K562 (cell line): ENCODE measurements at regions of chr1 and their contacts with region 1.

Region 1: DNA sequence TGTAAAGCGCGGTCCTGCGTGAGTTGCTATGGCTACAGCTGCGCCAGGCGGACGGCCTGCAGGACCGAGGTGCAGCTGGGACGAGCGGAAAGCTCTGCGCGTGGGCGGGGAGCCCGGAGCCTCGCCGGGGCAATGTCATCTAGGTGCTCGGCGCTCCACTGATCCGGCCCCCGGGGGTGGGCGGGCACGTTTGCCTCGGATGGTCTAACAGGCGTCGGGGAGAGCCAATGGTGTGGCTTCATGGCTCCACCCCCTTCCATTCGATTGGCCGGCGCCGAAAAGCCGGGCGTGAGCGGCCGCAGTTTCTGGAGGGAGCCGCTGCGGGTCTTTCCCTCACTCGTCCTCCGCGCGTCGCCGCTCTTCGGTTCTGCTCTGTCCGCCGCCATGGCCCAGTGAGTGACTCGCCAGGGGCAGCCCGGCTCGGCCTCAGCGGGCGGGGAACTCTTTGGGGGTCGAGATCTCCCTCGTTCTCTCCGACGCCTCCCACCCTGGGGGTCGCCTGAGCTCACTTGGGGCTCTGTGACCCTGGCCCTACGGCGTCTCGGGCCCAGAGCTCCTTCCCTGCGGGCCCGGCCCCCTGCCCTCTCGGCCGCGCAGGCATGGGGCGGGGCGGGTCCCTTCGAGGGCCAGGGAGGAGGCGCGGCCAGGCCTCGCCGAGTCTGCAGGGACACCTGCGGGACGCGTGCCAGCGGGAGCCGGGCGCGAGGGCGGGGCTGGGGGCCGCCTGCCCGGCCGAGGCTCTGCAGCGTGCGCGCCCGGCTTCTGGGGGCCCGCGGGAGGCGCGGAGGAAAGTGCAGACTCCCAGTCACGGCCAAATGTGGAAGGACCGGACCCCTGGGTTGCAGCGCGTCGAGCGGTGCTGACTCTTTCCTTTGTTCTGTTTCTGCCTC is at the start of gene PGD:
- DNase-seq: peak; percentile 100
- ATAC-seq: peak; percentile 96
- H3K4me3 ChIP-seq: peak within 1 kb of the TSS; percentile 66
- H3K27ac ChIP-seq: peak within 1 kb of the TSS; percentile 92
- H3K4me1 ChIP-seq: peaks cover 21 to 23% of the 10 kb centered on the region in 2 experiments
- H3K27me3 ChIP-seq: no peaks in the 10 kb centered on the region
- CTCF ChIP-seq: peak in 1 of 3 experiments; percentile 17; a peak in 2 of 6 replicates
- EP300 ChIP-seq: no peak
- POLR2A ChIP-seq: peak; percentile 98
- RAD21 ChIP-seq: 0 out of 4 replicates have a peak, but pooled peaks of 1 of the 2 experiments have one; percentile 6
- polyA plus RNA-seq, gene PGD: 292 to 542 TPM

Region 2: DNA sequence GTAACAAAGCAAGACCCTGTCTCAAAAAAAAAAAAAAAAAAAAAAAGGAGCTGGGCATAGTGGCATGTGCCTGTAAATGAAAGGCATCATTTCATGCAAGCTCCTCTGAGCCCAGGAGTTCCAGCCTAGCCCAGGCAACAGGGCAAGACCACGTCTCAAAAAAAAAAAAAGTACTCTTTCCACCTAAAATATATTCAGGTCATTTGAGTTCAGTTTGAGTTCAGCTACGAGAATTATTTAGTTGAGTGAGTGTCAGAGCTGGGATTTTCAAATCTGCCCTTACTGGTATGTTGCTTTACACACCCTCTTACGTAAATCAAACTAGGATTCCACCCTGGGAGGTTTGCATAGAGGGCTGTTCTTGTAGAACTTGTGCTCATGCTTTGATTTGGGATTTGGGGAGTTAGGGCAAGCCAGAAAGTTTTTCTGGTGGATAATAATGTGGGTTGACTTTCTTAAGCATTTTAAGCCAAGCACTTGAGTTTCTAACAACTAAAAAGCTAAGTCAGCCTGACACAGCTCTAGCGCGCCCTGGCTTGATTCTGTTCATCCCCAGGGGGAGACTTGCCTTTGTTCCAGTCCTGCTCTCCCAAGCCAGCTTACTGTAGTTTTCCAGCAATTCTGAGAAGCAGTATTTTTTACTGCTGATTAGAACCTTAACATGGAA is 11.4 kb before region 1 on chr1:
- CTCF ChIA-PET with region 1: no interaction called
- POLR2A ChIA-PET with region 1: interaction called, 29 read pairs
- in situ Hi-C with region 1: no loop called
- intact Hi-C with region 1: loop called (anchors 1 kb)
- DNase-seq: peak in 2 of 4 experiments; percentile 30 to 35
- ATAC-seq: peak; percentile 63; the same call in 2 of the 3 replicates
- H3K4me3 ChIP-seq: no peak overlapping the region
- H3K27ac ChIP-seq: peak overlapping the region; percentile 36; the same call in 2 of the 3 replicates
- H3K4me1 ChIP-seq: peaks cover 3 to 11% of the 10 kb centered on the region in 2 experiments; a peak in 2 of 5 replicates
- H3K27me3 ChIP-seq: no peaks in the 10 kb centered on the region
- CTCF ChIP-seq: no peak
- EP300 ChIP-seq: no peak
- POLR2A ChIP-seq: no peak
- RAD21 ChIP-seq: no peak

Region 3: DNA sequence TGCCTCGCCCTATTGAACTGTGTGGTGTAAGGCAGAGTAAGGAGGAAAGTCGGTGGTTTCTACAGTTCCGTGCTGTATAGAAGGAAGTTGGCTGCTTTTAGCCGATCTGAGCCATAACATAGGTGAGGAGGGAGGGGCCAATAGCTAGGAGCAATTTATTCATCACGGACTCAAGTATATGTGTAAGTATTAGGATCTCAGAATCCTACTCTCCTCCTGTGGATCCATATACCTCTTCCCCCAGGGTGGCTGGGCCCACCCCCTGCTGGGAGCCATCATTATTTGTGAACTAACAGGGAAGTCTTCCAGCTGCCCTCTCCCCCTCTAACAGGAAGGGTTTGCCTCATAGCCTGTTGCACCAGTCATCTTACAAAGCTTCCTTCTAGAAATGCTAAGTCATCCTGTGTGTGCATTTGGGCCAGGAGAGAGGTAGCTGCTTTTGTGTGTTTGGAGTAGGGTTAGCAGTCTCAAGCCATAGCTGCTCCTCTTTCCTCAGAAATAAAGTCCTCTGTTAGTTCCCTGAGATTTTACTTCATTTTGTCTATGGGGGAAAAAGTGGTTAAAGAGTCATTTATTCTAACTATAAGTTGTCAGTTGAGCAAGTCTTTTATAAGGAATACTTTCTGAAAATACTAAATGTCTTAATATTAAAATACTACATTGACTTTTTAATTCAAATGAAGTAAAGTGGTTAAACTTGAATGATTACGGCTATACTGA is 16.4 kb after region 1 on chr1:
- CTCF ChIA-PET with region 1: no interaction called
- POLR2A ChIA-PET with region 1: interaction called, 27 read pairs
- in situ Hi-C with region 1: no loop called
- intact Hi-C with region 1: loop called (anchors 2 kb)
- DNase-seq: peak; percentile 72 to 94 (median 82)
- ATAC-seq: peak; percentile 98
- H3K4me3 ChIP-seq: no peak overlapping the region
- H3K27ac ChIP-seq: peak overlapping the region; percentile 96
- H3K4me1 ChIP-seq: peaks cover 8 to 14% of the 10 kb centered on the region in 2 experiments; a peak in 4 of 5 replicates
- H3K27me3 ChIP-seq: no peaks in the 10 kb centered on the region
- CTCF ChIP-seq: 0 out of 6 replicates have a peak, but pooled peaks of 1 of the 3 experiments have one; percentile 1
- EP300 ChIP-seq: peak; percentile 83
- POLR2A ChIP-seq: peak; percentile 75
- RAD21 ChIP-seq: peak; percentile 12 to 27; a peak in 1 of 4 replicates

Region 4: GRCh38 chr1:10714337-10715114 is 315.5 kb after region 1 on chr1:
- CTCF ChIA-PET with region 1: no interaction called
- POLR2A ChIA-PET with region 1: no interaction called
- in situ Hi-C with region 1: no loop called
- intact Hi-C with region 1: no loop called
- DNase-seq: no peak
- ATAC-seq: no peak
- H3K4me3 ChIP-seq: no peak overlapping the region
- H3K27ac ChIP-seq: no peak overlapping the region
- H3K4me1 ChIP-seq: peaks cover 12 to 27% of the 10 kb centered on the region in 2 experiments; a peak in 4 of 5 replicates
- H3K27me3 ChIP-seq: peaks cover 57 to 84% of the 10 kb centered on the region in 2 experiments
- CTCF ChIP-seq: no peak
- EP300 ChIP-seq: no peak
- POLR2A ChIP-seq: no peak
- RAD21 ChIP-seq: no peak